Common myeloid progenitor, CD34-positive (primary cell): ENCODE measurements at regions of chr2 and their contacts with region 1.

Region 1: GRCh38 chr2:152743002-152743401 is 24.6 kb downstream of the ARL6IP6 start:
- DNase-seq: peak in 1 of 3 donors; percentile 21
- H3K4me3 ChIP-seq: no peak overlapping the region
- H3K27ac ChIP-seq: no peak overlapping the region
- H3K4me1 ChIP-seq: no peaks in the 10 kb centered on the region
- H3K27me3 ChIP-seq: no peaks in the 10 kb centered on the region

Region 2: DNA sequence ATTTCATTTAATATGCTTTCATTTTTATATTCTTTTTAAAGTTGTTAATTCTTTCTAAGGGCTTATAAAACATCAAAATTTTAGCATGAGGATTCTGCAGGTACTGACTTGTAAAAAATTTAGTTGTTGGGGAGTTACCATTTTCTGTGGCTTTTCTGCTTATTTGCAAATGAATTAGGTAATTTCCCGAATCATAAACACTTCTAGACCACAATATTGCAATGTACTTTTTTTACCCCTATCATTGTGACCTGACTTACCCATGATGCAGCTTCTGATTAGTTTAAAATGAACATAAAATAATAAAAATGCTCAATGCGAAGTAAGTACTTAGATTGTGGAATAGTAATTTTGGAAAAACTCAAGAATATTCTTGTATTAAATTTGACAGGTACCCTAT is 13.2 kb before region 1 on chr2:
- CTCF ChIA-PET with region 1: interaction called, 11 read pairs
- POLR2A ChIA-PET with region 1: no interaction called
- DNase-seq: peak in 2 of 3 donors; percentile 31 to 32
- H3K4me3 ChIP-seq: no peak overlapping the region
- H3K27ac ChIP-seq: no peak overlapping the region
- H3K4me1 ChIP-seq: peaks cover 2 to 21% (median 11%) of the 10 kb centered on the region in 4 experiments
- H3K27me3 ChIP-seq: no peaks in the 10 kb centered on the region

Region 3: DNA sequence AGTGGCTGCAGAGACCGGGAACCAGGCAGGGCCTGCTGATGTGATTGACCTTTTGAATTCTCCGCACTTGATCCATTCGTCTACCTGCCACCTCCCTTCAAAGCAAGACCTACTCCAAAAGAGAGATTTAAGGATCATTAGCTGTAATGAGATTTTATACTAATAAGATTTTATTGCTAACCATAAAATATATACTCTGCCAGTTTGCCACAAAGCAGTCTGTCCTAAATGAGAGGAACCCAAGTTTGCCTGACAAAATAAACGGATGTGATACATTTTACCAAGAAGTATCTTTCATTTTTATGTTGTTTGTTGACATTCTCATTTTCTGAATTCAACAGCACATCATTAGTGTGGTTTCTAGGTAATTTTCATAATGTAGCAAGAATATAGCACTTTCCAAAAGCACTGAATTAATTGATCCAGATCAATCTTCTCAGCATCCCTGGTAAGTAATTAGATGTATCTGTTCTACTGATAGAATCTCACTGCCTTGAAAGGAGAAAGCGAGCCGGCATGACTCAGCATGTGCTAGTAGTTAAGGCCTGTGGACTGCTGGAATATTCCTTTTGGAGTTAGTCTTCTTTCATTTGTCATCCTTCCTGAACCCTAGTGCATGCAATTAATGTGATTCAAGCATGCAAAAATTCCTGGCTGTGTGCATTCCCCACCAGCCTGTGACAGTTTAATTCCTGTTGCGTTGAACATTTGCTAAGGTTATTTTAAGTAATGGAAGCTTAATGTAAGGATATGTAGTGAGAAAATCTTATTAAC is 103.9 kb after region 1 on chr2:
- CTCF ChIA-PET with region 1: no interaction called
- POLR2A ChIA-PET with region 1: no interaction called
- DNase-seq: no peak
- H3K4me3 ChIP-seq: no peak overlapping the region
- H3K27ac ChIP-seq: no peak overlapping the region
- H3K4me1 ChIP-seq: no peaks in the 10 kb centered on the region
- H3K27me3 ChIP-seq: no peaks in the 10 kb centered on the region